ENCODE measurements at regions of chr10 and their contacts with region 1.

Region 1: GRCh38 chr10:22615819-22616499 is 98.4 kb downstream of the PIP4K2A start:
- DNase-seq: peak; percentile 82
- H3K4me3 Mint-ChIP-seq: peak overlapping the region; percentile 79
- H3K27ac Mint-ChIP-seq: peak overlapping the region; percentile 88
- H3K4me1 Mint-ChIP-seq: peaks cover 39% of the 10 kb centered on the region
- H3K27me3 Mint-ChIP-seq: no peaks in the 10 kb centered on the region
- CTCF ChIP-seq: no peak

Region 2: GRCh38 chr10:22173494-22173893 is 442.5 kb before region 1 on chr10:
- CTCF ChIA-PET with region 1: no interaction called
- POLR2A ChIA-PET with region 1: no interaction called
- intact Hi-C with region 1: no loop called
- DNase-seq: no peak
- H3K4me3 Mint-ChIP-seq: no peak overlapping the region
- H3K27ac Mint-ChIP-seq: no peak overlapping the region
- H3K4me1 Mint-ChIP-seq: no peaks in the 10 kb centered on the region
- H3K27me3 Mint-ChIP-seq: peaks cover 14% of the 10 kb centered on the region
- CTCF ChIP-seq: no peak

Region 3: GRCh38 chr10:22630234-22631174 is 14.5 kb after region 1 on chr10:
- CTCF ChIA-PET with region 1: no interaction called
- POLR2A ChIA-PET with region 1: interaction called, 13 read pairs
- intact Hi-C with region 1: no loop called
- DNase-seq: peak; percentile 47
- H3K4me3 Mint-ChIP-seq: no peak overlapping the region
- H3K27ac Mint-ChIP-seq: no peak overlapping the region
- H3K4me1 Mint-ChIP-seq: peaks cover 21% of the 10 kb centered on the region
- H3K27me3 Mint-ChIP-seq: no peaks in the 10 kb centered on the region
- CTCF ChIP-seq: no peak

Region 4: GRCh38 chr10:22682237-22683139 is 66.5 kb after region 1 on chr10:
- CTCF ChIA-PET with region 1: interaction called, 5 read pairs
- POLR2A ChIA-PET with region 1: interaction called, 5 read pairs
- intact Hi-C with region 1: loop called (anchors 5 kb)
- DNase-seq: peak; percentile 61
- H3K4me3 Mint-ChIP-seq: peak overlapping the region; percentile 38
- H3K27ac Mint-ChIP-seq: peak overlapping the region; percentile 88
- H3K4me1 Mint-ChIP-seq: peaks cover 33% of the 10 kb centered on the region
- H3K27me3 Mint-ChIP-seq: no peaks in the 10 kb centered on the region
- CTCF ChIP-seq: no peak

Region 5: GRCh38 chr10:22816298-22816653 is 200.3 kb after region 1 on chr10:
- CTCF ChIA-PET with region 1: no interaction called
- POLR2A ChIA-PET with region 1: interaction called, 3 read pairs
- intact Hi-C with region 1: loop called (anchors 2 kb)
- DNase-seq: peak; percentile 92
- H3K4me3 Mint-ChIP-seq: peak overlapping the region; percentile 38
- H3K27ac Mint-ChIP-seq: peak overlapping the region; percentile 97
- H3K4me1 Mint-ChIP-seq: peaks cover 16% of the 10 kb centered on the region
- H3K27me3 Mint-ChIP-seq: no peaks in the 10 kb centered on the region
- CTCF ChIP-seq: no peak

Measured in MCF 10A (cell line).